ENCODE measurements at regions of chr7 and their contacts with region 1.

Region 1: GRCh38 chr7:74489997-74490945 is 36.6 kb downstream of the GTF2IRD1 start:
- DNase-seq: peak in 1 of 5 donors; percentile 34
- H3K4me3 ChIP-seq: no peak overlapping the region
- H3K27ac ChIP-seq: no peak overlapping the region
- H3K4me1 ChIP-seq: peaks cover 2% of the 10 kb centered on the region
- H3K27me3 ChIP-seq: no peaks in the 10 kb centered on the region
- CTCF ChIP-seq: no peak
- EP300 ChIP-seq: no peak
- POLR2A ChIP-seq: no peak

Region 2: GRCh38 chr7:74439546-74439945 is 50.7 kb before region 1 on chr7:
- intact Hi-C with region 1: loop called in 1 of 4 experiments (anchors 5 kb)
- DNase-seq: no peak
- H3K4me3 ChIP-seq: no peak overlapping the region
- H3K27ac ChIP-seq: no peak overlapping the region
- H3K4me1 ChIP-seq: no peaks in the 10 kb centered on the region
- H3K27me3 ChIP-seq: no peaks in the 10 kb centered on the region
- CTCF ChIP-seq: no peak
- EP300 ChIP-seq: no peak
- POLR2A ChIP-seq: no peak

Measured in ovary (tissue), 10 donors.